Transverse colon (tissue), 4 donors: ENCODE measurements at regions of chr1 and their contacts with region 1.

Region 1: GRCh38 chr1:203463469-203464062 is 12.0 kb upstream of the PRELP start:
- DNase-seq: no peak
- H3K4me3 ChIP-seq: no peak overlapping the region
- H3K27ac ChIP-seq: peak overlapping the region; percentile 69 to 87 (median 84)
- H3K4me1 ChIP-seq: peaks cover 17 to 45% (median 33%) of the 10 kb centered on the region in 4 donors
- H3K27me3 ChIP-seq: no peaks in the 10 kb centered on the region
- CTCF ChIP-seq: peak in 2 of 5 experiments; percentile 37 to 47
- EP300 ChIP-seq: no peak
- POLR2A ChIP-seq: no peak

Region 2: DNA sequence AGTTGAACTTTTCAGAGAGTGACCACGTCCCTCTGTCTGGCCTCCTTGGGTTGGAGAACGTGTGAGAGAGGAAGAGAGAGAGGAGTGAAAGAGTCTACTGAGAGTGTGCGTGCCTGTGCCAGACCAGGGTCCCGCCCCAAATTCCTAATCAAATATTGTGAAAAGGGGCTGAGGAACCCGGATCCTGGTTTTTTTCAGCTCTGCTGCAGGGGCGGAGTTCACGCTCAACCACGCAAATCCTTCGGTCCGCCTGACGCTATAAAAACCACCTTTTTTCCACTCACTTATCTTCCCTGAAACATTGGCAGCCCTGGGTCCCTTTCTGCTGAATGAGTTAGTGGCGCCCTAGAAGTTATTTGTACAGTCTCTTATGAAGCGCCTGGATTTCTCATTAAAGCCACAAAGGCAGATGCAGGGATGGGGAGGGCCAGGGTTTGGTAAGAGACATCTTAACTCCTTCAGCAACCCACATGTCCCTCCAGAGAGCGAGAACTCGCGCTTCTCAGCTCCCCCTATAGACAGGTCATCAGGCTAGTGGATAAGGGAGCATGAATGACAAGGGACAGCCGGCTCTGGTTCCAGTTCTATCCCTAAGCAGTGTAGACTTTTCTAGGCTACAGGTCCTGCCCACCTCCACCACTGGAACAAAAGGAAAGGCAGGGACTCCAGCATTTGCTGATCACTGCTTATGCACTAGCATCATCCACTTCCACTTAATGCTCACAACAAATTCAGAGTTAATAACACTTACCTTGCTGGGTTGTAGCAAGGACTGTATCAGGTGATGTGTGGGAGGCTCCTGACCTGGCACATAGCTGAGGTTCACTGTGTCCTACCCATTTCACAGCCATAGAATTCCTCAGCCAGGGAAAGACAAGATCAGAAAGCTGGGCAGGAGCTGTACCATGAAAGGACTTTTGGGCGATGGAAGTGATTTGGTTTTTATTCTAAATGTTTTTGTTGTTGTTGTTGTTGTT is 112.2 kb before region 1 on chr1 and contains the start of gene FMOD:
- in situ Hi-C with region 1: loop called in 1 of 4 experiments (anchors 25 kb)
- intact Hi-C with region 1: no loop called
- DNase-seq: peak; percentile 62
- H3K4me3 ChIP-seq: peak within 1 kb of the TSS in 3 of 4 donors; percentile 9 to 36 (median 11)
- H3K27ac ChIP-seq: peak within 1 kb of the TSS; percentile 39 to 72 (median 54)
- H3K4me1 ChIP-seq: peaks cover 0 to 23% (median 18%) of the 10 kb centered on the region in 4 donors
- H3K27me3 ChIP-seq: no peaks in the 10 kb centered on the region
- CTCF ChIP-seq: no peak
- EP300 ChIP-seq: no peak
- POLR2A ChIP-seq: no peak
- total RNA-seq, gene FMOD: 13.5 to 44.0 (median 17.8) TPM